ENCODE measurements at regions of chr17 and their contacts with region 1.

Region 1: GRCh38 chr17:7173687-7174602 is 5.2 kb downstream of the ASGR1 start:
- DNase-seq: peak; percentile 63 to 73
- H3K4me3 ChIP-seq: peak overlapping the region; percentile 5 to 14
- H3K27ac ChIP-seq: no peak overlapping the region
- H3K4me1 ChIP-seq: peaks cover 0 to 15% (median 12%) of the 10 kb centered on the region in 4 donors
- H3K27me3 ChIP-seq: peaks cover 0 to 60% of the 10 kb centered on the region in 2 donors
- CTCF ChIP-seq: no peak

Region 2: DNA sequence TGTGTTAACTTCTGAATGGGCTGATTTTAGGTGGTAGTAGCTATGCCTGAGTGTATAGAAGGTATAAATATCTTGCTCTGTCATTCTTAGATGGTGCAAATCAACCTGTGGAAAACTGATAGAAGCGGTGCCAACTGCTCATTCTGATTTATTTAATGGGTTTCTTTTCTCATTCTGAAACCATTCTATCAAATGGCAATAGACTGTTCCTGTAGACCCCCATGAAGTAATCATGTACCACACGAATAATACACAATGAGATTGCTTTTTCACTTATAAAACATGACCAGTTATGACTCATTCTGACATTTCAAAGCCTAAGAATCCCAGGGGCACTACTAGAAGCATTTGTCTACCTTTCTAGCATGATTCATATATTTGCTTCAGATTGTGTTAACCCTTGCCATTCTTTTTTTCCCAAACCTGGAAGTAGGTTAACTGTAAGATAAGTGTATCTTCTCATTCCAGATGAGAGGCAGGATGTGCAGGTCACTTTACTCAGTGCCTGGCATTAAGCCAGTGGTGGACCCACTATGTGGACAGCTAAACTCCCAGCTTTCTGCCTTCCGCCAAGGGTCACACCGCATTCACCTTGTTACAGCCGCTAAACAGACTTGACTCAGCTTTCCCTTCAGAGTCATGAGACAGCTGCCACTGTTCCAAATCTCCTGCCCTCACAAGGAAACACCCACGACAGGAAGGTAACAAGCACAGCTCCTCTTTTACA is 113.6 kb before region 1 on chr17:
- intact Hi-C with region 1: loop called (anchors 2 kb)
- DNase-seq: no peak
- H3K4me3 ChIP-seq: no peak overlapping the region
- H3K27ac ChIP-seq: no peak overlapping the region
- H3K4me1 ChIP-seq: no peaks in the 10 kb centered on the region
- H3K27me3 ChIP-seq: peaks cover 0 to 19% of the 10 kb centered on the region in 2 donors
- CTCF ChIP-seq: no peak

Measured in tibial artery (tissue), 4 donors.